SK-N-SH (cell line): ENCODE measurements at regions of chr17 and their contacts with region 1.

Region 1: GRCh38 chr17:34199932-34200534 is 55.1 kb upstream of the CCL2 start:
- DNase-seq: peak; percentile 79
- H3K4me3 ChIP-seq: peak overlapping the region in 1 of 2 experiments; percentile 21; a peak in 1 of 4 replicates
- H3K27ac ChIP-seq: no peak overlapping the region
- H3K4me1 ChIP-seq: no peaks in the 10 kb centered on the region
- H3K27me3 ChIP-seq: no peaks in the 10 kb centered on the region
- CTCF ChIP-seq: peak; percentile 99
- EP300 ChIP-seq: no peak
- RAD21 ChIP-seq: peak; percentile 100

Region 2: GRCh38 chr17:34051046-34051445 is 149.0 kb before region 1 on chr17:
- CTCF ChIA-PET with region 1: no interaction called
- POLR2A ChIA-PET with region 1: no interaction called
- DNase-seq: no peak
- H3K4me3 ChIP-seq: no peak overlapping the region
- H3K27ac ChIP-seq: no peak overlapping the region
- H3K4me1 ChIP-seq: no peaks in the 10 kb centered on the region
- H3K27me3 ChIP-seq: no peaks in the 10 kb centered on the region
- CTCF ChIP-seq: no peak
- EP300 ChIP-seq: no peak
- RAD21 ChIP-seq: no peak

Region 3: GRCh38 chr17:34163646-34164045 is 36.4 kb before region 1 on chr17:
- CTCF ChIA-PET with region 1: interaction called, 12 read pairs
- POLR2A ChIA-PET with region 1: no interaction called
- DNase-seq: peak; percentile 60
- H3K4me3 ChIP-seq: no peak overlapping the region
- H3K27ac ChIP-seq: no peak overlapping the region
- H3K4me1 ChIP-seq: no peaks in the 10 kb centered on the region; a peak in 1 of 4 replicates
- H3K27me3 ChIP-seq: no peaks in the 10 kb centered on the region; the same call in 1 of the 2 replicates
- CTCF ChIP-seq: peak; percentile 41
- EP300 ChIP-seq: no peak
- RAD21 ChIP-seq: peak; percentile 80

Region 4: GRCh38 chr17:34220754-34221395 is 20.8 kb after region 1 on chr17:
- CTCF ChIA-PET with region 1: interaction called, 10 read pairs
- POLR2A ChIA-PET with region 1: no interaction called
- DNase-seq: no peak
- H3K4me3 ChIP-seq: no peak overlapping the region
- H3K27ac ChIP-seq: no peak overlapping the region
- H3K4me1 ChIP-seq: no peaks in the 10 kb centered on the region
- H3K27me3 ChIP-seq: no peaks in the 10 kb centered on the region
- CTCF ChIP-seq: no peak
- EP300 ChIP-seq: no peak
- RAD21 ChIP-seq: no peak

Region 5: DNA sequence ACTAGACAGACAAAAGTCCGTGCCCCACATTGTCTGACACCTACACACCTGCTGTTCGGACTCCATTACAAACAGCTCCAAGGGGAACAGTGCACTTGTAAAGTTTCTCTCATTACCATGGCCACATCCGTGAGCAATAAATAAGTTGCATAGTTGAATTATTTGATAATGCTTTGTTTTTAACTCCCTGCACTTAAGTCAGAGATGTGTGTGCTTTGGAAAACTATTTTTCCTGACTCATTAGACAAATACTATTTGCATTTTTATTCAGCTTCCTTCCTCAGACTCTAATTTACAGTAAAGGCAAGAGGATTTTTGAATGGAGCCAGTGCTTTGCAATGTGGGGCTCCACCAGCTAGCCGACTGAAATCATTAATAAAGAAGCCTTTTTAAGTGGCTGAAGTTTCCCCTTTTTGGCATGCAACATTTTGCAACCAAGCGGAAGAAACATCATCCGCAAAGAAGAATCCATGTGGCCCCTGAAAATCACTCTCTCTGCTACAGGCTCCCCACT is 48.5 kb after region 1 on chr17:
- CTCF ChIA-PET with region 1: interaction called, 10 read pairs
- POLR2A ChIA-PET with region 1: no interaction called
- DNase-seq: no peak
- H3K4me3 ChIP-seq: no peak overlapping the region
- H3K27ac ChIP-seq: peak overlapping the region; percentile 34 to 98
- H3K4me1 ChIP-seq: peaks cover 23 to 49% of the 10 kb centered on the region in 2 experiments
- H3K27me3 ChIP-seq: no peaks in the 10 kb centered on the region
- CTCF ChIP-seq: no peak
- EP300 ChIP-seq: peak in 1 of 2 experiments; percentile 65; a peak in 1 of 4 replicates
- RAD21 ChIP-seq: no peak

Region 6: GRCh38 chr17:34347063-34347462 is 147.0 kb after region 1 on chr17:
- CTCF ChIA-PET with region 1: interaction called, 11 read pairs
- POLR2A ChIA-PET with region 1: no interaction called
- DNase-seq: no peak
- H3K4me3 ChIP-seq: no peak overlapping the region
- H3K27ac ChIP-seq: no peak overlapping the region
- H3K4me1 ChIP-seq: no peaks in the 10 kb centered on the region
- H3K27me3 ChIP-seq: no peaks in the 10 kb centered on the region
- CTCF ChIP-seq: no peak
- EP300 ChIP-seq: no peak
- RAD21 ChIP-seq: no peak

Region 7: DNA sequence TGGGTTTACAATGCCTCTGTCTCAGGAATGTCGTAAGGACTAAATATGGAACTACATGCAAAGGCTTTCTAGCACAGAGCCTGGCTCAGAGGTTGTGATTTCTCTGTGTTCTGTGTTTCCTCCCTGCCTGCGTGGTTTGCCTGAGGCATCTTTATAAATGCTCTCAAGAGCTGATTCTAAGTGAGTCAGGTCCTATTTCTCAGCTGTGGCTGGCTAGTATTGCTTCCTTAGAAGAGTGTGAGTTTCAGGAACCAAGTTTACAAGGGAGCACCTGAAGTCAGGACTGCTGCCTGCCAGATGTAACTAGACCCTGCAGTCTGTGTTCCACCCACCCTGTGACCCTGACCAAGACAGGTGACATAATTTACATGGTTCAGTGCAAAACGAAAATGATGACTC is 171.0 kb after region 1 on chr17:
- CTCF ChIA-PET with region 1: interaction called, 11 read pairs
- POLR2A ChIA-PET with region 1: no interaction called
- DNase-seq: no peak
- H3K4me3 ChIP-seq: no peak overlapping the region
- H3K27ac ChIP-seq: no peak overlapping the region
- H3K4me1 ChIP-seq: no peaks in the 10 kb centered on the region
- H3K27me3 ChIP-seq: no peaks in the 10 kb centered on the region; the same call in 1 of the 2 replicates
- CTCF ChIP-seq: no peak
- EP300 ChIP-seq: no peak
- RAD21 ChIP-seq: no peak